ENCODE measurements at regions of chr1 and their contacts with region 1.

Region 1: GRCh38 chr1:183685112-183685713 is 32.1 kb upstream of the APOBEC4 start:
- DNase-seq: peak; percentile 11
- ATAC-seq: peak; percentile 75
- H3K4me3 ChIP-seq: no peak overlapping the region
- H3K27ac ChIP-seq: no peak overlapping the region
- H3K4me1 ChIP-seq: 0 out of 2 replicates have a peak, but pooled peaks cover 2% of the 10 kb centered on the region
- H3K27me3 ChIP-seq: no peaks in the 10 kb centered on the region
- CTCF ChIP-seq: peak; percentile 60 to 77 (median 65)
- EP300 ChIP-seq: no peak
- POLR2A ChIP-seq: no peak
- RAD21 ChIP-seq: peak; percentile 81

Region 2: DNA sequence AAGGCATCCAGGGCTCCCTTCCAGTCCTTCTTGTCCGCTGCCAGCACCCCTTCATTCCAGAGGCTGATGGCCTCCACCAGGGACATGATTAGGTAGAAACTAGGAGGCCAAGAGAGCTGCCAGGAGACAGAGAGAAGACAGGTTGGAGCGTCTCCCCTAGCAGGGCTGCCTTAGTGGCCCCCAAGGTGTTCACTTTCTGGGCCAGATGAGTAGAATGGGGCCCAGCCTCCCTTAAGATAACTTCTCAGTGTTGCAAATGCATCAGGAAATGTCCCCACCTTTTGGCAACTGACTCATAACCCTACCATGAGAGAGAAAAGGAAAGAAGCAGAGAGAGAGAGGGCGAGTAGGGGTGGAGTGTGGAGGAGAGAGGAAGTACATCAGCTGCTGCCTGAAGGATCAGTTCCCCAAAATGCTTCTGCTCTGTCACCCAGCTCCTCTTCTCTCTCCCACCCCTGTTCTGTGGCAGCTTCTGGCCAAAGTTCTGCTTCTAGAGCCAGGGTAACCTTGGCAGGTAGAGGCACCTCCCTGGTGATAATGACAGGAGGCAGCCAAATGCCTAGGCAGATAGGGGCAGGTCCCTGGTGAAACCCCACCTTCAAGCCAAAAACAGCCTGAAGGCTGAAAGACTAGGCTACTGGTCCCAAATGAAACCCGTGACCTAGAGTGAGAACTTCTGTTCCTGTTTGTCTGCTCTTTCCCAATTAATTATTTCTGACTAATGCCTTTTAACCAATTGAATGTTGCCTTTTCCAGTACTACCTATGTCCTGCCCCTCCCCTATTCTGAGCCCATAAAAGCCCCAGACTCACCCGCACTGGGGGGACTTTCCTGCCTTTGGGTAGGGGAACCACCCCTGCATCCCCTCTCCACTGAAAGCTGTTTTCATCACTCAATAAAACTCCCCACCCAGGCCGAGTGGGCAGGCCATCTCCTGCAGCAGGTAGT is 94.7 kb before region 1 on chr1 and contains the start of gene NCF2:
- CTCF ChIA-PET with region 1: interaction called, 10 read pairs
- POLR2A ChIA-PET with region 1: no interaction called
- RAD21 ChIA-PET with region 1: no interaction called
- SMC1A ChIA-PET with region 1: interaction called, 3 read pairs
- in situ Hi-C with region 1: no loop called
- intact Hi-C with region 1: no loop called
- DNase-seq: peak; percentile 96
- ATAC-seq: peak; percentile 79
- H3K4me3 ChIP-seq: peak within 1 kb of the TSS; percentile 73
- H3K27ac ChIP-seq: peak within 1 kb of the TSS; percentile 95
- H3K4me1 ChIP-seq: peaks cover 48% of the 10 kb centered on the region
- H3K27me3 ChIP-seq: no peaks in the 10 kb centered on the region
- CTCF ChIP-seq: no peak
- EP300 ChIP-seq: peak; percentile 74 to 93
- POLR2A ChIP-seq: peak; percentile 64
- RAD21 ChIP-seq: peak; percentile 46; the same call in 1 of the 2 replicates
- polyA plus RNA-seq, gene NCF2: 31.4 to 61.2 TPM

Region 3: DNA sequence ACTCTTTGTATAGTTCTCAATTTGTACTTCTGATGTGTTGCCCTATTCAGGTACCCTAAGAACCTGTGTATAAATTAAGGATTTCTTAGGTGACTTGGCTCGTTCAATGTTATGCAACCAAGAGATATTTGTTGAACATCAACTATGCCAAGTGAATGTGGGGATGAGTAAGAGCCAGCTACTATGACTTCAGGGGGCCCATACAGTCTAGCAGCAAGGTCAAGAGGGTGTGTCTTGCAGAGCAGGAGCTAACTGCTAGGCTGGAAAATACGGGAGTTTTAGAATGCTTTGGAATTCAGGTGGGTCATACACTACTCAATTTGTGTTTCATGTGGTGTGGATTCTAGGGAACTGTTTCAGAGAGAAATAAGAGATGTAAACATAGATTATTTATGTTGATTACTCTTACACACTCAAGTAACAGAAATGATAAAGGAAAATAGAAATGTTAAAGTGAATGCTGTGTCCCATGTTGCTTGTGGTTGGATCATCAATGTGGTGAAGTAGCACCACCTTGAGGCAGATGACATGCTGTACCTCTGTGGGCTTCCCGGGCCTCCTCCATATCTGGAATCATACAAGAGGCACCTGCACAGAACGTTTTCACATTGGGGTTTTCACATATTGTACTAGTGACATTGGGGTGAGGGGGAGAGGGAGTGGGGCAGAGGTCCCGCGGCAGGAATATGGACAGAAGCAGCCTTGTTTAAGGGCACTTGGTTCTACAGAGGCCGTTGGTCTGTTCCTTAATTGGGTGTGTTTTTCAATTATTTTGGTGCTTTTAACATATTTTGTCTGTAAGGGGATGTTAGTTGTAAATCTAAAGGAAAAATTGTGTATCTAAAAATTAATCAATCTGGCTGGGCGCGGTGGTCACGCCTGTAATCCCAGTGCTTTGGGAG is 62.1 kb before region 1 on chr1:
- CTCF ChIA-PET with region 1: interaction called, 17 read pairs
- POLR2A ChIA-PET with region 1: no interaction called
- RAD21 ChIA-PET with region 1: interaction called, 9 read pairs
- SMC1A ChIA-PET with region 1: interaction called, 5 read pairs
- in situ Hi-C with region 1: no loop called
- intact Hi-C with region 1: no loop called
- DNase-seq: no peak
- ATAC-seq: peak; percentile 94
- H3K4me3 ChIP-seq: no peak overlapping the region
- H3K27ac ChIP-seq: no peak overlapping the region
- H3K4me1 ChIP-seq: no peaks in the 10 kb centered on the region; the same call in 1 of the 2 replicates
- H3K27me3 ChIP-seq: no peaks in the 10 kb centered on the region
- CTCF ChIP-seq: peak; percentile 73 to 77 (median 77); a peak in 5 of 6 replicates
- EP300 ChIP-seq: no peak
- POLR2A ChIP-seq: peak; percentile 25; the same call in 1 of the 2 replicates
- RAD21 ChIP-seq: peak; percentile 86

Region 4: GRCh38 chr1:183646776-183647175 is 38.4 kb before region 1 on chr1:
- CTCF ChIA-PET with region 1: interaction called, 199 read pairs
- POLR2A ChIA-PET with region 1: interaction called, 6 read pairs
- RAD21 ChIA-PET with region 1: interaction called, 101 read pairs
- SMC1A ChIA-PET with region 1: interaction called, 128 read pairs
- in situ Hi-C with region 1: no loop called
- intact Hi-C with region 1: no loop called
- DNase-seq: no peak
- ATAC-seq: peak; percentile 43
- H3K4me3 ChIP-seq: no peak overlapping the region
- H3K27ac ChIP-seq: no peak overlapping the region
- H3K4me1 ChIP-seq: peaks cover 6% of the 10 kb centered on the region
- H3K27me3 ChIP-seq: no peaks in the 10 kb centered on the region
- CTCF ChIP-seq: no peak
- EP300 ChIP-seq: no peak
- POLR2A ChIP-seq: no peak
- RAD21 ChIP-seq: no peak

Region 5: GRCh38 chr1:183774938-183775337 is 89.7 kb after region 1 on chr1:
- CTCF ChIA-PET with region 1: no interaction called
- POLR2A ChIA-PET with region 1: no interaction called
- RAD21 ChIA-PET with region 1: no interaction called
- SMC1A ChIA-PET with region 1: no interaction called
- in situ Hi-C with region 1: no loop called
- intact Hi-C with region 1: no loop called
- DNase-seq: no peak
- ATAC-seq: no peak
- H3K4me3 ChIP-seq: no peak overlapping the region
- H3K27ac ChIP-seq: no peak overlapping the region
- H3K4me1 ChIP-seq: no peaks in the 10 kb centered on the region
- H3K27me3 ChIP-seq: no peaks in the 10 kb centered on the region
- CTCF ChIP-seq: no peak
- EP300 ChIP-seq: no peak
- POLR2A ChIP-seq: no peak
- RAD21 ChIP-seq: no peak

Region 6: GRCh38 chr1:183804881-183805841 is 119.9 kb after region 1 on chr1 and contains the start of gene RGL1:
- CTCF ChIA-PET with region 1: interaction called, 7 read pairs
- POLR2A ChIA-PET with region 1: interaction called, 4 read pairs
- RAD21 ChIA-PET with region 1: interaction called, 3 read pairs
- SMC1A ChIA-PET with region 1: interaction called, 4 read pairs
- in situ Hi-C with region 1: no loop called
- intact Hi-C with region 1: loop called (anchors 5 kb)
- DNase-seq: no peak
- ATAC-seq: peak; percentile 72
- H3K4me3 ChIP-seq: peak within 1 kb of the TSS; percentile 90
- H3K27ac ChIP-seq: peak within 1 kb of the TSS; percentile 93
- H3K4me1 ChIP-seq: peaks cover 11% of the 10 kb centered on the region; the same call in 1 of the 2 replicates
- H3K27me3 ChIP-seq: no peaks in the 10 kb centered on the region
- CTCF ChIP-seq: no peak
- EP300 ChIP-seq: 0 out of 4 replicates have a peak, but pooled peaks of 1 of the 2 experiments have one; percentile 14
- POLR2A ChIP-seq: peak; percentile 81
- RAD21 ChIP-seq: no peak
- polyA plus RNA-seq, gene RGL1: 8.1 to 9.4 TPM

Region 7: DNA sequence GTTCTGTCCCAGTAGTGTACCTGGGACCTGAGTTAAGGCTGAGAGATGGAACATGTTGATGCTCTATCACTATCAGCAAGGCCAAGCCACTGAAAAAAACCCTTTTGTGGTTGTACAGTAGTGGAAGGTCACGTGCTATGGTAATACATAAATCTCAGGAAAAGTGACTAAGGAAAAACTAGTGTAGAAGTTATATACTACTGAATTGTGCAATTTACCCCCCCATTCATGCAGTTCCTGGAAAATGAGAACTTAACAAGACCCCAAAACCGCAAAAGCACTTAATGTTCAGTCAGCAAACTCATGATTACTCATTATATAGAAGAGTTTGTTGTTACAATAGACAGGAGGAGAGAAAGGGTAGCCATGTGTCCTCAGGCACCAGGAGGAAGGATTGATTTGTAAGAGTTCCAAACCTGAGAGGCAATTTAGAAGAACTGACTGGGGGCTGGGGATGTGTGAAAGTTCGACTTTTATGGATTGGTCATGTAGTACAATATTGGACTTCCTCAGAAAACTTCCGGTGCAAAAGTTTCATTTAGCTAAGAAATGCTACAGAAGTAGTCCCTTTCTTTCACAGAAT is 211.3 kb after region 1 on chr1:
- CTCF ChIA-PET with region 1: interaction called, 17 read pairs
- POLR2A ChIA-PET with region 1: interaction called, 6 read pairs
- RAD21 ChIA-PET with region 1: interaction called, 11 read pairs
- SMC1A ChIA-PET with region 1: interaction called, 8 read pairs
- in situ Hi-C with region 1: no loop called
- intact Hi-C with region 1: no loop called
- DNase-seq: no peak
- ATAC-seq: peak; percentile 27
- H3K4me3 ChIP-seq: no peak overlapping the region; the same call in 1 of the 2 replicates
- H3K27ac ChIP-seq: peak overlapping the region; percentile 97
- H3K4me1 ChIP-seq: peaks cover 80% of the 10 kb centered on the region
- H3K27me3 ChIP-seq: no peaks in the 10 kb centered on the region
- CTCF ChIP-seq: no peak
- EP300 ChIP-seq: no peak
- POLR2A ChIP-seq: no peak
- RAD21 ChIP-seq: no peak

Region 8: GRCh38 chr1:184019069-184019468 is 333.9 kb after region 1 on chr1:
- CTCF ChIA-PET with region 1: no interaction called
- POLR2A ChIA-PET with region 1: no interaction called
- RAD21 ChIA-PET with region 1: no interaction called
- SMC1A ChIA-PET with region 1: no interaction called
- in situ Hi-C with region 1: no loop called
- intact Hi-C with region 1: no loop called
- DNase-seq: no peak
- ATAC-seq: no peak
- H3K4me3 ChIP-seq: no peak overlapping the region
- H3K27ac ChIP-seq: no peak overlapping the region
- H3K4me1 ChIP-seq: no peaks in the 10 kb centered on the region
- H3K27me3 ChIP-seq: peaks cover 0 to 14% of the 10 kb centered on the region in 2 experiments; a peak in 2 of 4 replicates
- CTCF ChIP-seq: no peak
- EP300 ChIP-seq: no peak
- POLR2A ChIP-seq: no peak
- RAD21 ChIP-seq: no peak